IMR-90 (cell line): ENCODE measurements at regions of chr10 and their contacts with region 1.

Region 1: DNA sequence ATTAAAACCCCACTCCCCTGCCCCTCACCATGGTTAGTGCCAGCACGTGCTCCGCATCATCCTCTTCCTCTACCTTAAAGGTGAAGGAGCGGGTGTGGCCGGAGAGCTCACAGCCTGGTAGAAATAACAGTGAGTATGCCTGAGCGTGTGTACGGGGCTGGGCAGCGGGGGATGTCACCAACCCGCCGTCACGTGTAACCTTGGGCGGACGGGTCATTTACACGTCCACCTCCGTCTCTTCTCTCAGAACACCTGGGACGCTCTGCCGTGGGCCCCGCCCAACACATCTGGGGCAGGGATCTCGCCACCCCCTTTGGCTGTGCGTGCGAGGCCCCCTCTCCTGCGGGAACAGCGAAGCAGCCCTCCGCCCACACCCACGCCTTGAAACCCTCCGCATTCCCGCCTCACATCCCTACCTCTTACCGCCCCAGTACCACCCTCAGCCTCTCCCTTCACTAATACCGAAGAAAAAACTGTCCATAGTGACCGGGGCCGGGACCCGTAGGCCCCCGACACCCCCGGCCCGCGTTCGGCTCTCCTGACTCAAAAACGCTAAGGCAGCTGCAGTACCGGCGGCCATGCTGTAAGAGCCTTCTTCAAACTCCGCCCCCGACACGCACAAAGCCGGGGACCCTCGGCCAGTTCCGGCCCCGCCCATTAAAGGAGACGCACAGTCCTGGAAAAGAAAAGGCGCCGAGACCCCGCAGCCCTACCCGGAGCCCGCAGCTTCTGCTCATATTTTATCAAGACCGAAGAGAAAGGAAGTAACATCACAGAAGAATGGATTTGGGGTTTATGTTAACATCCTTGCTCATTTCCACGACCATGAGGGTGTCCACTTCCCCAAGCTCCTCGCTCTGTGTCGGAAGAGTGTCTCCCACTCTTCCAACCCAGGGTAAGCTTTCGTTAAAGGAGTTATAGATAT is at the start of gene NPM3:
- DNase-seq: peak; percentile 70
- ATAC-seq: peak; percentile 84
- H3K4me3 ChIP-seq: peak within 1 kb of the TSS; percentile 63
- H3K27ac ChIP-seq: peak within 1 kb of the TSS; percentile 51
- H3K4me1 ChIP-seq: peaks cover 11% of the 10 kb centered on the region
- H3K27me3 ChIP-seq: peaks cover 3% of the 10 kb centered on the region; the same call in 1 of the 2 replicates
- CTCF ChIP-seq: no peak
- POLR2A ChIP-seq: peak; percentile 59; the same call in 1 of the 2 replicates
- RAD21 ChIP-seq: no peak
- total RNA-seq, gene NPM3: 112 and 122 TPM in 2 replicates

Region 2: DNA sequence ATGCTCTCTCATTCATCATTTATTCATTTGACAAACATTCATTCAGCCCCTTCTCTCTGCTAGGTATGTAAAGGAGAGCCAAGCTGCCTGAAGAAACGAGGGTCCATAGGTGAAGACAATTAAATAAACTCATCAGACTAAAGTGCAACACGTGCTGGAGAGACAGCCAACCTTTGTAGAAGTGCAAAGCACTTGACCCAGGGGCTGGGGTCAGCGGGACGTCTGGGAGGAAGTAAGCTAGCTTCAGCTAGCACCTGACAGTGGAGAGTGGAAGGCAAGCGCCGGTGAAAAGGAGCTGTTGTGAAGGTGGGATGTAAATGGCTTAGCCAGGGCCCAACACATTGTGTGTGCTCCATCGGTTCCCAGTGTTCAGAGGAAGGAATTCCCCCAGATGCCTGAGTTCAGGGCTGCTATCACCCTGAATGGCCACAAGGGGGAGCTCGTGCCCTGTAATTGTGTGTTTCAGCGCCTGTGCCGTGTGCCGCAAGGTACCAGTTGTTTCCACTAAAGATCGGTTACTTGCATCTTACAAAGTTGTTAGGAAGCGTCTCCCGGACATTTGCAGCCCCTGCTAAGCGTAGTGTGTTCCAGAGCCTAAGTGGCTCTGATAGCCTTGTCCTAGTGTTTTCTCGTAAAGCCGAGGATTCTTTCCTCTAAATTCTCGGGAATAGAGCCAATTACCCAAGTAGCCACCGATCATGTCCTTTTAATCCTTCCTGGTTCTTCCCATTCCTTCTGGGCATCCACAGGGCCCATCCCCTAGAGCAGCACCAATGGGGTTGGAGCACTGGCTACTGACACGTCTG is 621.4 kb before region 1 on chr10:
- CTCF ChIA-PET with region 1: no interaction called
- POLR2A ChIA-PET with region 1: no interaction called
- dilution Hi-C with region 1: no loop called
- in situ Hi-C with region 1: no loop called
- intact Hi-C with region 1: loop called (anchors 1 kb)
- DNase-seq: peak; percentile 65
- ATAC-seq: peak; percentile 97
- H3K4me3 ChIP-seq: peak overlapping the region; percentile 28
- H3K27ac ChIP-seq: no peak overlapping the region
- H3K4me1 ChIP-seq: no peaks in the 10 kb centered on the region
- H3K27me3 ChIP-seq: peaks cover 40% of the 10 kb centered on the region
- CTCF ChIP-seq: peak; percentile 94
- POLR2A ChIP-seq: no peak
- RAD21 ChIP-seq: peak; percentile 82

Region 3: GRCh38 chr10:101297901-101298486 is 485.1 kb before region 1 on chr10:
- CTCF ChIA-PET with region 1: no interaction called
- POLR2A ChIA-PET with region 1: no interaction called
- dilution Hi-C with region 1: no loop called
- in situ Hi-C with region 1: no loop called
- intact Hi-C with region 1: loop called (anchors 10 kb)
- DNase-seq: peak; percentile 39
- ATAC-seq: peak; percentile 89
- H3K4me3 ChIP-seq: no peak overlapping the region
- H3K27ac ChIP-seq: no peak overlapping the region
- H3K4me1 ChIP-seq: no peaks in the 10 kb centered on the region
- H3K27me3 ChIP-seq: peaks cover 68% of the 10 kb centered on the region
- CTCF ChIP-seq: peak; percentile 67
- POLR2A ChIP-seq: no peak
- RAD21 ChIP-seq: no peak

Region 4: GRCh38 chr10:101569838-101570766 is 213.0 kb before region 1 on chr10:
- CTCF ChIA-PET with region 1: no interaction called
- POLR2A ChIA-PET with region 1: no interaction called
- dilution Hi-C with region 1: no loop called
- in situ Hi-C with region 1: no loop called
- intact Hi-C with region 1: no loop called
- DNase-seq: peak; percentile 35
- ATAC-seq: peak; percentile 91
- H3K4me3 ChIP-seq: peak overlapping the region; percentile 49
- H3K27ac ChIP-seq: no peak overlapping the region
- H3K4me1 ChIP-seq: peaks cover 6% of the 10 kb centered on the region
- H3K27me3 ChIP-seq: peaks cover 43% of the 10 kb centered on the region
- CTCF ChIP-seq: peak; percentile 64
- POLR2A ChIP-seq: 0 out of 2 replicates have a peak, but pooled peaks have one; percentile 12
- RAD21 ChIP-seq: peak; percentile 70

Region 5: GRCh38 chr10:101602761-101603398 is 180.2 kb before region 1 on chr10:
- CTCF ChIA-PET with region 1: interaction called, 9 read pairs
- POLR2A ChIA-PET with region 1: no interaction called
- dilution Hi-C with region 1: no loop called
- in situ Hi-C with region 1: loop called (anchors 5 kb)
- intact Hi-C with region 1: loop called (anchors 1 kb)
- DNase-seq: peak; percentile 64
- ATAC-seq: peak; percentile 84
- H3K4me3 ChIP-seq: no peak overlapping the region
- H3K27ac ChIP-seq: no peak overlapping the region
- H3K4me1 ChIP-seq: no peaks in the 10 kb centered on the region
- H3K27me3 ChIP-seq: no peaks in the 10 kb centered on the region
- CTCF ChIP-seq: peak; percentile 66
- POLR2A ChIP-seq: no peak
- RAD21 ChIP-seq: peak; percentile 73

Region 6: GRCh38 chr10:101609481-101609880 is 173.6 kb before region 1 on chr10:
- CTCF ChIA-PET with region 1: interaction called, 3 read pairs
- POLR2A ChIA-PET with region 1: no interaction called
- dilution Hi-C with region 1: no loop called
- in situ Hi-C with region 1: loop called (anchors 5 kb)
- intact Hi-C with region 1: no loop called
- DNase-seq: peak; percentile 26
- ATAC-seq: peak; percentile 69
- H3K4me3 ChIP-seq: no peak overlapping the region
- H3K27ac ChIP-seq: no peak overlapping the region
- H3K4me1 ChIP-seq: peaks cover 9% of the 10 kb centered on the region
- H3K27me3 ChIP-seq: no peaks in the 10 kb centered on the region
- CTCF ChIP-seq: no peak
- POLR2A ChIP-seq: no peak
- RAD21 ChIP-seq: no peak

Region 7: DNA sequence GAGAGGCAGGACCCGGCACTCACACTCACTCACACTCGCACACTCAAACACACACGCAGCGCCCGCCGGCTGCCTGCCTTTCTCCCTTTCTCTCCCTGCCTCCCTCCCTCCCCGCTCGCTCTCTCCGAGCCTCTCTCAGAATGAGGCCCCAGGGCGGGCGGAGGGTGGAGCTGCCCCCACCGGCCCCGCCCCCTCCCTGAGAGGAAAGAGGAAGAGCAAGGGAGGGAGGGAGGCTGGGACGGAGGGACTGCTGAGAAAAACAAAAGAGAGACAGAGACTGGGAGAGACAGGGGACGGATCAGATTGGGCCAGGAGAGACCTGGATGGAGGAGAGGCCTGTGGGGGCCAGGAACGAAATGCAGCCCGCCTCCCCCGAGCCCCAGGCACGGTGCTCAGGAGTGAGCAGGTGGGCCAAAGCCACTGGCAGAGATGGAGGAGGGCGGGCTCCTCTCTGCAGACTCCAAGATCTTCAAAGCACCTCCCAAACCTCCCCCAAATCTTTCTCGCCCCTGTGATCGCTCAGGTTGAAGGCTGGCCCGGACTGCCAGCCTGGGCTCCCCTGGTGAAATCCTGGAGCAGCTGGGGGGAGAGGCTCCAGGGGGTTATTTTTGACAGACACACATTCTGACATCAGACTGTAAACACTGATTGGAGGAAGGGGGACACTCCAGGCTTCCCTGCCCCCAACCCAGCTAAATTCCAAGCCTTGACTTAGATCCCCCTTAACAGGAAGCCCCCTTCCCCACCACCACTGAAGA is 332.0 kb after region 1 on chr10:
- CTCF ChIA-PET with region 1: no interaction called
- POLR2A ChIA-PET with region 1: no interaction called
- dilution Hi-C with region 1: no loop called
- in situ Hi-C with region 1: no loop called
- intact Hi-C with region 1: no loop called
- DNase-seq: peak; percentile 65
- ATAC-seq: peak; percentile 77
- H3K4me3 ChIP-seq: peak overlapping the region; percentile 92
- H3K27ac ChIP-seq: peak overlapping the region; percentile 85
- H3K4me1 ChIP-seq: peaks cover 36% of the 10 kb centered on the region
- H3K27me3 ChIP-seq: no peaks in the 10 kb centered on the region
- CTCF ChIP-seq: no peak
- POLR2A ChIP-seq: peak; percentile 71
- RAD21 ChIP-seq: no peak